ENCODE measurements at regions of chr12 and their contacts with region 1.

Region 1: DNA sequence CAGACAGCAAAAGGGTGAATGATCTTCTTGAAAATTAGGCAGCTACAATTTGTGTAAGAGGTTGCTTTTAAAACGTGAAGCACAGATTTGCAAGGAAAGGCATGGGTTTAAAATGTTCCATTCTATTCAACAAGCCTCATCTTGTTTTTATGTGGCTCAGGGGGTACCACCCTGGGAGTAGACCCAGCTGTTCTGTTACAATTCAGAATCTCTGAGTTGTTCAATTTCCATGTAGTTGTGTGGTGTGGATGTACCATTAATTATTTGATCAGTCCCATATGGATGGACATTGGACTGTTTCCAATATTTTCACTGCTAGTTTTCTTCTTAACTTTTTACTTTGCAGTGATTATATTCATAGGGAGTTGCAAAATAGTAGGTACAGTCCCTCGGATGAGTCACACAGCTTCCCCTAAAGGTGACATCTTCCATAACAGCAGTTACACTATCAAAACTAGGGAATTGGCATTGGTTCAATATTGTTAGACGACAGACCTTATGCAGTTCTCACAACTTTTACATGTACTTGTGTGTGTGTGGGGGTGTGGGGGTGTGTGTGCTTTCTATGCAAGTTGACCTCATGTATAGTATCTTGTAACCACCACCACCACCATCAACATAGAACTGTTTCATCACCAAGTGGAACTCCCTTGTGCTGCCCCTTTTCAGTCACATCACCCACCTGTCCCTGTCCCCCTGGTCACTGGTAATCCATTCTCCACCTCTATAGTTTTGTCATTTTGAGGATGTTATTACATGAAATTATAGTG is 59.0 kb upstream of the CAPRIN2 start:
- DNase-seq: no peak
- H3K4me3 ChIP-seq: no peak overlapping the region
- H3K27ac ChIP-seq: no peak overlapping the region
- H3K27me3 ChIP-seq: peaks cover 0 to 25% (median 0%) of the 10 kb centered on the region in 45 donors
- CTCF ChIP-seq: no peak

Region 2: GRCh38 chr12:30695199-30696103 is 118.3 kb before region 1 on chr12 and contains the start of gene IPO8:
- intact Hi-C with region 1: loop called in 1 of 2 experiments (anchors 10 kb)
- DNase-seq: peak; percentile 82 to 94 (median 92)
- H3K4me3 ChIP-seq: peak within 1 kb of the TSS; percentile 37 to 100 (median 95)
- H3K27ac ChIP-seq: peak within 1 kb of the TSS in 56 of 59 donors; percentile 19 to 92 (median 74)
- H3K27me3 ChIP-seq: no peaks in the 10 kb centered on the region
- CTCF ChIP-seq: peak in 28 of 56 donors; percentile 4 to 54 (median 24)
- total RNA-seq, gene IPO8: 32.8 to 62.2 (median 44.7) TPM

Measured in dorsolateral prefrontal cortex (tissue), 120 donors.